PC-9 (cell line): ENCODE measurements at regions of chr20 and their contacts with region 1.

Region 1: DNA sequence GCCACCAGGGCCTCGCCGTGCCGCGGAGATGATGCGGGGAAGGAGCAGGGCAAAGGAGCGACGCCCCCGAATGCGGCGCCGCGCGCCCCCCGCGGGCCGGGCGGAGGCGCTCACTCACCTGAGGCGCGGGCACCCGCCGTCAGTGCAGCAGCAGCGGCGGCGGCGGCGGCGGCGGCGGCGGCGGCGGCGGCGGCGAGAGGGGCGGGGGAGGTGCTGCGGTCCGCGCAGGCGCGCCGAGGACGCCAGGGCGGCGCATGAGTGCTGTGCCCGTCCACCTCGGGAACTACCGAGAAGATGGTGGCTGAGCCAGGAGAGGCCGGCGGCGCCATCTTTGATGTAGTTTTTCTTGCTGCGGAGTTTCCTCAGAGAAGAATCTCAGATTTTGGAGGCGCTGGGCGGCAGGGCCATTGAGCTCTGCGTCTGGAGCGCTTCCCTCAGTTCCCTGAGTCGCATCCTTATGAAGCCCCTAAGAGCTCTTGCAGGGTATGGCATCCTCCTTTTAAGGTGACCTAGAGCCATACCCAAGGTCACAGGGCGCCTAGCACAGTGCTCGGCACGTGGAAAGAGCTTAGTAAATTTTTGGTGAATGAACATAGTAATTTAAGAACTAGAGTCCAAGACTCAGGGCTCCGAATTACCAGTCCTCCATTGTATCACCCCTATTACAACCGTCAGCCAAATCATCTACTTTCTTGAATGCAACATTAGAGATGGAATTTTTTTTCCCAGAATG is at the start of gene NDRG3:
- DNase-seq: peak; percentile 85 to 92
- H3K4me3 ChIP-seq: peak within 1 kb of the TSS; percentile 97
- H3K27ac ChIP-seq: peak within 1 kb of the TSS; percentile 46
- H3K4me1 ChIP-seq: peaks cover 18% of the 10 kb centered on the region
- H3K27me3 ChIP-seq: no peaks in the 10 kb centered on the region
- CTCF ChIP-seq: no peak
- total RNA-seq, gene NDRG3: 40.7 and 55.6 TPM in 2 replicates

Region 2: DNA sequence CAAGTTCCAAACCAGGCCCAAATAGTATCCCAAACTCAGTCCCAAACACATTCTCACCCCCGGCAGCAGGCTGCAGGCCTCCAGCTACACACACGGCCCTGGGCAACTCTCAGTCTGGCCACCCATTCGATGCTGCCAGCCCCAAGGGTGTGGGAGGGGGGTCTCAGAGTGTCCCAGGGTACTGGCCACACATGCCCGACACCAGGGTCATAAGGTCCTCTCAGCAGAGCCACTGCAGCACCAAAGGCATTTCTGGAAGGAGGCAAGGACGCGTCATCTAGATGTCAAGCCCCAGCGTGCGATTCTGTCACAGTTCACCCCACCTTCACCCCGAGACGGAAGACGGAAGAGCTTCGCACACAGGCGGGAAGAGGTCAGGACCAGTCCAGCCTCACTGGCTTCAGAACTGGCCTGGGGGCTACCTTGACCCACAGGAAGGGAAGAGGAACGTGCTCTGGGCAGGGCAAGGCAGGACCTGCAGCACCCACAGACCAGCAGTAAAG is 195.2 kb before region 1 on chr20:
- CTCF ChIA-PET with region 1: no interaction called
- POLR2A ChIA-PET with region 1: no interaction called
- intact Hi-C with region 1: loop called (anchors 10 kb)
- DNase-seq: no peak
- H3K4me3 ChIP-seq: no peak overlapping the region
- H3K27ac ChIP-seq: no peak overlapping the region
- H3K4me1 ChIP-seq: no peaks in the 10 kb centered on the region
- H3K27me3 ChIP-seq: no peaks in the 10 kb centered on the region
- CTCF ChIP-seq: no peak

Region 3: DNA sequence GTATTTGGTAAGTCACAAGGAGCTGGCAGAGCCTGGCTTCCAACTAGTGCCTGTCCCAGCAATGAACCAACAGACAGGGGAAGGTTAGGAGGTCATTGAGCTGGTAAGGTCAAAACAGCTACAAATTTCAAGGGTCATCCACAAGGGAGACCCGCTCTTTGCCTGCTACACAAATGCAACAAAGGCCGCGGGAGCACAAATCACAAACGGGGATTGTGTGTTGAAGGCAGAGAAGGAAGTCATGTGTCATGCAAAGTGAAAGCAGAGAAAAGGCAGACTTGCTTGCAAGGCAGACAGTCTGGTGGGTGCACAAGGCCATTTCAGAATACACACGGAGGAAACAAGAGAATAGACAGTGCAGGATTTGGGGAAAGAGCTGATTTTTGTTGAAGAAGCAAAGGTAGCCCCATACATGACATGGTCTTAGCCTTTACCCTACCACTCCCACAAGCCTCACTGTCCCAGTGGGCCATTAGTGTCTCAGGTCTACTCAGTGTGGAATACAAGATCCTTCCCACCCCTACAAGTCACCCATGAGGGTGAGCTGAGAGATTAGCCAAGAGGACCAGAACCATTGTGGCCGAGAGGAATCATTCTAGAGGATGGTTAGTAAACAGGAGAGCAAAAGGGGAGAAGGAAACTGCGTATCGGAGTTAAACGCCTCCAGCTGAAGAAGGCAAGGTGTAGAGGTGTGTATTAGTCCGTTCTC is 223.5 kb after region 1 on chr20:
- CTCF ChIA-PET with region 1: interaction called, 15 read pairs
- POLR2A ChIA-PET with region 1: no interaction called
- intact Hi-C with region 1: no loop called
- DNase-seq: no peak
- H3K4me3 ChIP-seq: no peak overlapping the region
- H3K27ac ChIP-seq: no peak overlapping the region
- H3K4me1 ChIP-seq: no peaks in the 10 kb centered on the region
- H3K27me3 ChIP-seq: no peaks in the 10 kb centered on the region
- CTCF ChIP-seq: no peak